AG04450 (cell line): ENCODE measurements at regions of chr6 and their contacts with region 1.

Region 1: DNA sequence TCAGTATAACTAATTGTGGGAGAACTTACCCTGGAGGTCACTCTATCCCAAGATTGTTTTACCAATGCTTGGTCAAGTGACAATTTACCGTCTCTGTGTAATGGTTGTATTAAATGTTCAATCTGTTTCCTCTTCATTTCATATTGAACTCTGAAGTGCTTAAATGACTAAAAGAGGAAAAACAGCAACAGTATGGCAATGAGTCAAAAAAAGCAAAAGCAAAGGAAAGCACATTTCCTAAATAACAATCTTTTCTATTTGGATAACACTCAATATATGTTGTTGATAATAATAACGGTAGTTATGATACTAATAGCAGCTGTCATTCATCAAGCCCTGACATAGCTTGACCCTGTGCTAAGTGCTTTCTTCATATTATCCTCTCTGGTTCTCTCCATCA is 152.4 kb downstream of the SYNE1 start:
- DNase-seq: no peak
- H3K4me3 ChIP-seq: no peak overlapping the region
- H3K27ac ChIP-seq: no peak overlapping the region
- H3K27me3 ChIP-seq: no peaks in the 10 kb centered on the region
- CTCF ChIP-seq: no peak

Region 2: DNA sequence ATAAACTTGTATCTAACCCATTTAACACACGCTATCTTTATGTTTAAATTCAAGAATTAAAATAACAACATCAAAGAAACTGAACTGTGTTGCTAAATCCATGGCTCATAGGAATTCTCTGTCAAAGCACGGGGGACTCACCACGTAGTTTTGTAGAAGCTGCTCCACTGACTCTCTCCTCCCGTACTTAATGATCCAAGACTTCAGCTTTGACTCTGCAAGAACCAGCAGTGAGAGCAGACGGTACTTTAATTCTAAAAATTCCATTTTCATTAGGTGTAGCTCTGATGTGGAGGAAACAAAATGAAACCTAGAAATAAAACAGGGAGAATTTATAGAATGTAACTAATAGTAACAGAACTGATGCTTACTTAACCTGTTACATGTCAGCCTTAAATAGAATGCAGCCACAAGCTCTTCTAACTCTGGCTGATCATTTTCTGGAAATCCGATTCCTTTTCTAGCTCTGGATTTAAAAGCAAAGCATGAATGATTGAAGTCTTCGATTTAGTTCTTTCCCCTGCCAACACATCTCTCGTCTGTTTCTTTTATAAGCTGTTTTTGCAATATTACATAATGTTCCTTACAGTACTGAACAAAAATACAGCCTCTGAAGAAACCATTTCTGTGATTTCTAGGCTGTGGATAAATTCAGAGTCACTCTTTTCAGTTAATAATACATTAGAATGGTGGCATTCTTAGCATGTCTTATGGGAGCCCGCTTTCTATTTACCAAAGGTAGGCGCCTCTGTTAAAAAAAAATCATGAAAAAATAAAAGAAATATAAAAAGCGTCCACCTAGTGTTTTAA is 13.1 kb before region 1 on chr6:
- CTCF ChIA-PET with region 1: interaction called, 22 read pairs
- POLR2A ChIA-PET with region 1: no interaction called
- DNase-seq: no peak
- H3K4me3 ChIP-seq: peak overlapping the region; percentile 39
- H3K27ac ChIP-seq: no peak overlapping the region
- H3K27me3 ChIP-seq: no peaks in the 10 kb centered on the region
- CTCF ChIP-seq: 0 out of 2 replicates have a peak, but pooled peaks have one; percentile 1

Region 3: GRCh38 chr6:152496731-152497130 is 11.9 kb after region 1 on chr6:
- CTCF ChIA-PET with region 1: interaction called, 14 read pairs
- POLR2A ChIA-PET with region 1: no interaction called
- DNase-seq: no peak
- H3K4me3 ChIP-seq: no peak overlapping the region
- H3K27ac ChIP-seq: no peak overlapping the region
- H3K27me3 ChIP-seq: no peaks in the 10 kb centered on the region
- CTCF ChIP-seq: no peak

Region 4: GRCh38 chr6:152566103-152566875 is 81.5 kb after region 1 on chr6:
- CTCF ChIA-PET with region 1: no interaction called
- POLR2A ChIA-PET with region 1: no interaction called
- DNase-seq: no peak
- H3K4me3 ChIP-seq: no peak overlapping the region
- H3K27ac ChIP-seq: no peak overlapping the region
- H3K27me3 ChIP-seq: no peaks in the 10 kb centered on the region
- CTCF ChIP-seq: no peak

Region 5: GRCh38 chr6:152642989-152643388 is 158.2 kb after region 1 on chr6:
- CTCF ChIA-PET with region 1: interaction called, 24 read pairs
- POLR2A ChIA-PET with region 1: no interaction called
- DNase-seq: no peak
- H3K4me3 ChIP-seq: no peak overlapping the region
- H3K27ac ChIP-seq: no peak overlapping the region
- H3K27me3 ChIP-seq: no peaks in the 10 kb centered on the region
- CTCF ChIP-seq: peak; percentile 57

Region 6: DNA sequence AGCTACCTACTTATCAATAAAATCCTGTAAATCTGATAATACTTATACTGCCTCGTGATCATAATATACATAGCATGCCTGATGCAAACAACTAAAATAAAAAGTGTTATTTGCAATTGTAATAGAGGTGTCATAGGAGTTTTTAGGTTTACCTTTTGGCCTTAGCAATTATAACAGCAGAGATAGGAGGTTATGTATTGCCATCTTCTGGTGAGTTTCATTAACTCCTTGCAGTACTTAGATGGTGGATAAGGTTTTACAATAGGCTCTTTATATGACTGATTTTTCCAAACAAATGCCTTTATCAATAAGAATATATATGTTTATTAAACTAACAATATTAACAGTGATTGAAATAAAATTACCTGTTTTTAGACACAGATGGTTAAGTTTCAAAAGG is 185.1 kb after region 1 on chr6:
- CTCF ChIA-PET with region 1: interaction called, 37 read pairs
- POLR2A ChIA-PET with region 1: no interaction called
- DNase-seq: no peak
- H3K4me3 ChIP-seq: no peak overlapping the region
- H3K27ac ChIP-seq: no peak overlapping the region
- H3K27me3 ChIP-seq: no peaks in the 10 kb centered on the region
- CTCF ChIP-seq: peak; percentile 62